A673 (cell line): ENCODE measurements at regions of chr1 and their contacts with region 1.

Region 1: GRCh38 chr1:92975551-92976232 is 14.4 kb upstream of the DIPK1A start:
- DNase-seq: no peak
- H3K4me3 ChIP-seq: no peak overlapping the region
- H3K27ac ChIP-seq: no peak overlapping the region
- H3K4me1 ChIP-seq: peaks cover 15% of the 10 kb centered on the region
- H3K27me3 ChIP-seq: no peaks in the 10 kb centered on the region
- CTCF ChIP-seq: no peak

Region 2: DNA sequence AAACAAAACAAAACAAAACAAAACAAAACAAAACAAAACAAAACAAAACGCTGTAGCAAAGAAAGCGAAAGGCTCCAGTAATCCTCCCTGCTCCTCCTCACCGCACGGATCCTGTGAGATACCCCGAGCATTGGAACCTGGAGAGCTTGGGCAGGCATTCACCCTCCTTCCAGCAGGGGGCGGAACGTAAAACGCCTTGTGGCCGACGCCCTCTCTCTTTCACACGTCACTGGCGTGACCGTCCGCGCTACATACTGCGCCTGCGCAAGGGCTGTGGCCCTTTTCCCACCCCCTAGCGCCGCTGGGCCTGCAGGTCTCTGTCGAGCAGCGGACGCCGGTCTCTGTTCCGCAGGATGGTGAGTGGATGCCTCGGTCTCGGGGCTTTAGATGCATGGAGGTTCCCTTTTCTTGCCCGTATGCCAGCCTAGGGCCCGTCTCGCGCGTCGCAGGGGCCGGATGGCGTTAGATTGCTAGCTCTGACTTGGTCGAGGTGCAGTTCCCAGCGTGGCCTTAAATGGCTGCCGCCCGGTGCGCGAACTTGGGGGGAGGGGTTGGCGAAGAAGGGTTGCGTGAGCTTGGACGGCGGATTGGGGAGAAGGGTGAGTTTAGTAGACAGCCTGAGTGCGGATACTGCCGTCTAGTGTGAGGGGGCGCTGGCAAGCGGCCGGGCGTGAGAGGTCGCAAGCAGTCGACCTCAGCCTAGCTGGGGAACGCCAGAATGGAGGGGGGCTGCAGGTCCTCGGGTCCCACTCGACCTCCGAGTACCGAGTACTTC is 143.7 kb before region 1 on chr1 and contains the start of gene RPL5:
- CTCF ChIA-PET with region 1: no interaction called
- POLR2A ChIA-PET with region 1: interaction called, 14 read pairs
- intact Hi-C with region 1: no loop called
- DNase-seq: peak; percentile 99
- H3K4me3 ChIP-seq: peak within 1 kb of the TSS; percentile 94
- H3K27ac ChIP-seq: peak within 1 kb of the TSS; percentile 95
- H3K4me1 ChIP-seq: peaks cover 25% of the 10 kb centered on the region
- H3K27me3 ChIP-seq: no peaks in the 10 kb centered on the region
- CTCF ChIP-seq: peak; percentile 96
- total RNA-seq, gene RPL5: 1,348 and 1,415 TPM in 2 replicates

Region 3: GRCh38 chr1:92916902-92917301 is 58.8 kb before region 1 on chr1:
- CTCF ChIA-PET with region 1: no interaction called
- POLR2A ChIA-PET with region 1: no interaction called
- intact Hi-C with region 1: no loop called
- DNase-seq: no peak
- H3K4me3 ChIP-seq: no peak overlapping the region
- H3K27ac ChIP-seq: no peak overlapping the region
- H3K4me1 ChIP-seq: no peaks in the 10 kb centered on the region
- H3K27me3 ChIP-seq: no peaks in the 10 kb centered on the region
- CTCF ChIP-seq: no peak

Region 4: DNA sequence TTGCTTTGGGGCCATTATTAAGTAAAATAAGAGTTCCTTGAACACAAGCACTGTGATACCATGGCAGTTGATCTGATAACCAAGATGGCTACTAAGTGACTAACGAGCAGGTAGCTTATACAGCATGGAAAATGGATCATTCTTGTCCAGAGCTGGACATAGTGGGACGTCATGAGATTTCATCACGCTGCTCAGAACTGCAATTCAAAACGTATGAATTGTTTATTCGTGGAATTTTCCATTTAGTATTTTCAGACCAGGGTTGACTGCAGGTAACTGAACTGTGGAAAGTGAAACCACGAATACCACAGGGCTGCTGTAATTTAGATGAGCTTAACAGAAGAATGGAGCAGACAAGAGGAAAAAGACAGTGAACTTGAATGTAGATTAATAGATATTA is 243.8 kb after region 1 on chr1:
- CTCF ChIA-PET with region 1: no interaction called
- POLR2A ChIA-PET with region 1: no interaction called
- intact Hi-C with region 1: no loop called
- DNase-seq: no peak
- H3K4me3 ChIP-seq: no peak overlapping the region
- H3K27ac ChIP-seq: no peak overlapping the region
- H3K4me1 ChIP-seq: no peaks in the 10 kb centered on the region
- H3K27me3 ChIP-seq: no peaks in the 10 kb centered on the region
- CTCF ChIP-seq: no peak